ENCODE measurements at regions of chr14 and their contacts with region 1.

Region 1: GRCh38 chr14:100900837-100901390 is 2.6 kb downstream of the RTL1 start:
- DNase-seq: peak; percentile 72
- ATAC-seq: peak; percentile 79
- H3K4me3 ChIP-seq: peak overlapping the region; percentile 8 to 53 (median 10); a peak in 4 of 6 replicates
- H3K27ac ChIP-seq: peak overlapping the region; percentile 58
- H3K4me1 ChIP-seq: peaks cover 54% of the 10 kb centered on the region
- H3K27me3 ChIP-seq: peaks cover 0 to 22% of the 10 kb centered on the region in 2 experiments; a peak in 2 of 5 replicates
- CTCF ChIP-seq: peak; percentile 97
- EP300 ChIP-seq: no peak
- POLR2A ChIP-seq: no peak
- RAD21 ChIP-seq: peak; percentile 96

Region 2: GRCh38 chr14:100662879-100663760 is 237.8 kb before region 1 on chr14:
- CTCF ChIA-PET with region 1: interaction called, 10 read pairs
- POLR2A ChIA-PET with region 1: no interaction called
- in situ Hi-C with region 1: loop called (anchors 5 kb)
- intact Hi-C with region 1: loop called (anchors 1 kb)
- DNase-seq: peak; percentile 77
- ATAC-seq: peak; percentile 23; the same call in 1 of the 3 replicates
- H3K4me3 ChIP-seq: peak overlapping the region in 2 of 3 experiments; percentile 1 to 19; a peak in 2 of 6 replicates
- H3K27ac ChIP-seq: no peak overlapping the region
- H3K4me1 ChIP-seq: peaks cover 89% of the 10 kb centered on the region
- H3K27me3 ChIP-seq: no peaks in the 10 kb centered on the region
- CTCF ChIP-seq: peak; percentile 80
- EP300 ChIP-seq: no peak
- POLR2A ChIP-seq: no peak
- RAD21 ChIP-seq: peak; percentile 56

Region 3: GRCh38 chr14:100755649-100756048 is 145.3 kb before region 1 on chr14:
- CTCF ChIA-PET with region 1: no interaction called
- POLR2A ChIA-PET with region 1: interaction called, 7 read pairs
- in situ Hi-C with region 1: no loop called
- intact Hi-C with region 1: loop called (anchors 2 kb)
- DNase-seq: no peak
- ATAC-seq: no peak
- H3K4me3 ChIP-seq: no peak overlapping the region
- H3K27ac ChIP-seq: no peak overlapping the region
- H3K4me1 ChIP-seq: peaks cover 59% of the 10 kb centered on the region
- H3K27me3 ChIP-seq: no peaks in the 10 kb centered on the region
- CTCF ChIP-seq: no peak
- EP300 ChIP-seq: no peak
- POLR2A ChIP-seq: no peak
- RAD21 ChIP-seq: no peak

Region 4: DNA sequence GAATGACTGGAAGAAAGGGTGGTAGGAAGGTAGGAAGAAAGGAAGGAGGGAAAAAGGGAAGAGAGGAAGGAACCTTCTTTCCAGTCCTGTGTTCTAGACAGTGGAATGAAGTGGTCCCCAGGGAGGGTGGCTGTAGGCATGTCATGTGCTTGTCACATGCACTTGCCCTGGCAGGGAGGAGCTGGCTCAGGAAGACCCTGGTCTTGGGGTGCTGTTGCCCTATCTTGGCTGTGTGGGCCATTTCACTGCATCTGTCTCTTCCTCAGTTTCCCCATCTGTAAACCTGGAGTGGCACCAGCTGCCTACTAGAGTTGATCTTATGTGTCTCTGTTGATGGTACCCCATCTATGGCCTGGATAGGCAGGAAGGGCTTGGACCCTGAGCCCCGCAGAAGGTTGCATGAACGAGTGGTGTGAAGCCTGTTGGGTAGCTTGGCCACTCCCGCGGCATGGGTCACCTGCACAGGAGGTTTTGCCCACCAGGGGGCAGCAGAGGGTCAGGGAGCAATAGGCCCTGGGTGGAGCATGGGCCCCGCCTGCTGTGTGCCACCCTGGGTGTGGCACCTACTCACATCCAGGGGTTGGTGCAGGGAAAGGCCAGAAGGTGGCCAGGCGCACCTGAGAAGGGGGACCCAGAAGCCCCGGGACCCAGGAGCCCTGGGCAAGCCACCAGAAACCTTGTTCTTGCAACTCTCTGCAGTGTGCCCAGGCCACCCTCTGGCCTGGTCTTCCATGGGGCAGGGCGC is 49.9 kb before region 1 on chr14:
- CTCF ChIA-PET with region 1: interaction called, 9 read pairs
- POLR2A ChIA-PET with region 1: no interaction called
- in situ Hi-C with region 1: no loop called
- intact Hi-C with region 1: loop called (anchors 1 kb)
- DNase-seq: peak; percentile 48
- ATAC-seq: peak; percentile 87
- H3K4me3 ChIP-seq: no peak overlapping the region
- H3K27ac ChIP-seq: no peak overlapping the region
- H3K4me1 ChIP-seq: peaks cover 49% of the 10 kb centered on the region
- H3K27me3 ChIP-seq: no peaks in the 10 kb centered on the region; a peak in 1 of 5 replicates
- CTCF ChIP-seq: peak; percentile 91
- EP300 ChIP-seq: no peak
- POLR2A ChIP-seq: no peak
- RAD21 ChIP-seq: peak; percentile 87

Region 5: GRCh38 chr14:101068313-101069227 is 167.7 kb after region 1 on chr14:
- CTCF ChIA-PET with region 1: no interaction called
- POLR2A ChIA-PET with region 1: no interaction called
- in situ Hi-C with region 1: loop called (anchors 5 kb)
- intact Hi-C with region 1: no loop called
- DNase-seq: no peak
- ATAC-seq: no peak
- H3K4me3 ChIP-seq: no peak overlapping the region
- H3K27ac ChIP-seq: no peak overlapping the region
- H3K4me1 ChIP-seq: no peaks in the 10 kb centered on the region
- H3K27me3 ChIP-seq: peaks cover 14 to 94% of the 10 kb centered on the region in 2 experiments; a peak in 4 of 5 replicates
- CTCF ChIP-seq: no peak
- EP300 ChIP-seq: no peak
- POLR2A ChIP-seq: no peak
- RAD21 ChIP-seq: no peak

Region 6: GRCh38 chr14:101235335-101236103 is 334.6 kb after region 1 on chr14:
- CTCF ChIA-PET with region 1: no interaction called
- POLR2A ChIA-PET with region 1: no interaction called
- in situ Hi-C with region 1: loop called (anchors 10 kb)
- intact Hi-C with region 1: loop called (anchors 1 kb)
- DNase-seq: peak; percentile 47
- ATAC-seq: peak; percentile 91
- H3K4me3 ChIP-seq: peak overlapping the region in 1 of 3 experiments; percentile 15; a peak in 1 of 6 replicates
- H3K27ac ChIP-seq: no peak overlapping the region
- H3K4me1 ChIP-seq: peaks cover 77% of the 10 kb centered on the region
- H3K27me3 ChIP-seq: peaks cover 0 to 10% of the 10 kb centered on the region in 2 experiments; a peak in 2 of 5 replicates
- CTCF ChIP-seq: peak; percentile 97
- EP300 ChIP-seq: no peak
- POLR2A ChIP-seq: no peak
- RAD21 ChIP-seq: peak; percentile 96

Region 7: DNA sequence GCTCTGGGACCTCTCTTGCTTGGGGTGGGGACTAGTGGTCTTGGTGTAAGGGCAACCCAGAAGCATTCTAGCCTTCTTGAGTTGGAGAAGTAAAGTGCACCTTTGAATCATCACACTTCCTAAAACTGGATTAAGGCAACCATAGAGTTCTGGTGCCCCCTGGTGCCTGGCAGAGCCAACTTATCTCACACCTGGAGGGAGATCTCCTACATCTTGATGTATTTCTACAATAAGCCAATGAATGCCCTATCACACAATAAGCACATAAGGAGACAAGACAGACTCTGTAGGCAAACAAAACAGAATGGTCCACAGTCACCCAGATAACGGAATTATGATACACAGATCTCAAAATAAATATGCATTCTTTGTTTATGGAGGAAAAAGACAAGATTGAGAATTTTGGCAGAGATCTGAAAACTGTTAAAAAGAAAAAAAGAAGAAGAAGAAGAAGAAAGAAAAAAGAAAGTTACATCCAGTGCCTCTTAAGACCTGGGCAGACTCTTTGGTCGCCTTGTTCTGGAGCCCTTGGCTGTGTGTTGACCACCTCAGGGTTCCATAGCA is 764.7 kb after region 1 on chr14:
- CTCF ChIA-PET with region 1: no interaction called
- POLR2A ChIA-PET with region 1: no interaction called
- in situ Hi-C with region 1: loop called (anchors 10 kb)
- intact Hi-C with region 1: no loop called
- DNase-seq: peak; percentile 32
- ATAC-seq: peak; percentile 56
- H3K4me3 ChIP-seq: no peak overlapping the region
- H3K27ac ChIP-seq: no peak overlapping the region
- H3K4me1 ChIP-seq: no peaks in the 10 kb centered on the region
- H3K27me3 ChIP-seq: peaks cover 0 to 6% of the 10 kb centered on the region in 2 experiments; a peak in 1 of 5 replicates
- CTCF ChIP-seq: peak; percentile 67
- EP300 ChIP-seq: no peak
- POLR2A ChIP-seq: no peak
- RAD21 ChIP-seq: peak; percentile 33; the same call in 1 of the 2 replicates